RWPE1 (cell line): ENCODE measurements at regions of chr17 and their contacts with region 1.

Region 1: DNA sequence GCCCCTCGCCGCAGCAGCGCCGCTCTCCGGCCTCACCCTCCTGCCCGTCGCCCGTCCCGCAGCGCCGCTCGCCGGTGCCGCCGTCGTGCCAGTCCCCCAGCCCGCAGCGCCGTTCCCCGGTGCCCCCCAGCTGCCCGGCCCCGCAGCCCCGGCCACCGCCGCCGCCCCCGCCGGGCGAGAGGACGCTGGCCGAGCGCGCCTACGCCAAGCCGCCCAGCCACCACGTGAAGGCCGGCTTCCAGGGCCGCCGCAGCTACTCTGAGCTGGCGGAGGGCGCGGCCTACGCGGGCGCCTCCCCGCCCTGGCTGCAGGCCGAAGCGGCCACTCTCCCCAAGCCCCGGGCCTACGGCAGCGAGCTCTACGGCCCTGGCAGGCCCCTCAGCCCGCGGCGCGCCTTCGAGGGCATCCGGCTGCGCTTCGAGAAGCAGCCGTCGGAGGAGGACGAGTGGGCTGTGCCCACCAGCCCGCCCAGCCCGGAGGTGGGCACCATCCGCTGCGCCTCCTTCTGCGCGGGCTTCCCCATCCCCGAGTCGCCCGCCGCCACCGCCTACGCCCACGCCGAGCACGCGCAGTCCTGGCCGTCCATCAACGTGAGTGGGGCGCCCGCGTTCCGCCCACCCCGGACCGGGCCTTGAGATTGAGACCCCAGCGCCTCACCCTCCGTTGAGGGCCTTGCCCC is 15.0 kb downstream of the TBKBP1 start:
- DNase-seq: no peak
- H3K27ac ChIP-seq: no peak overlapping the region
- CTCF ChIP-seq: no peak

Region 2: DNA sequence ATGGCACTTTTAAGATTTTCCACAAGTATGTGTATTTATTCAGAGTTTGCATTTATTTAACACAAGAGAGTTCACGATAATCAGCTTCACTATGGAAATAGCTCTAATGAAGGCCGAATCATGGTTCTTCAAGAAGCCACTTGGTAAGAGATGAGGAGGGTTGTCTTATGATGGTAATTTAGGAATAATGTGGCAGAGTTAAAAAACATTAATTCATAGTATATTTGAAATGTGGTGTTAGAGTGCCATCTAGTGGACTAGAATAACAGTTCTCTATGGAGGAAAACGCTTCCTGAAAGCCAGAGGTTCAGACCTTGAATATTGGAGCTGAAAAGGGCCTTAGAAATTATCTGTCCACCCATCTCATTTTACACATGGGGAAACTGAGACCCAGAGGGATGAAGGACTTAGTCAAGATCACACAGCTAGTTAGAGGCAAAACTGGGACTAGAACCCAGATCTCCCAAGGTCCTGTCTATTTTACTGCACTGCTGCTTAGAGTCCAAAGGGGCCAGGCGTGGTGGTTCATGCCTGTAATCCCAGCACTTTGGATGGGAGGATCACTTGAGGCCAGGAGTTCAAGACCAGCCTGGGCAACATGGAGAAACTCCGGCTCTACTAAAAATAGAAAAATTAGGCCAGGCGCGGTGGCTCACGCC is 93.1 kb before region 1 on chr17:
- CTCF ChIA-PET with region 1: no interaction called
- POLR2A ChIA-PET with region 1: no interaction called
- DNase-seq: peak; percentile 19
- H3K27ac ChIP-seq: 0 out of 2 replicates have a peak overlapping the region, but pooled peaks have one; percentile 29
- CTCF ChIP-seq: peak; percentile 79

Region 3: DNA sequence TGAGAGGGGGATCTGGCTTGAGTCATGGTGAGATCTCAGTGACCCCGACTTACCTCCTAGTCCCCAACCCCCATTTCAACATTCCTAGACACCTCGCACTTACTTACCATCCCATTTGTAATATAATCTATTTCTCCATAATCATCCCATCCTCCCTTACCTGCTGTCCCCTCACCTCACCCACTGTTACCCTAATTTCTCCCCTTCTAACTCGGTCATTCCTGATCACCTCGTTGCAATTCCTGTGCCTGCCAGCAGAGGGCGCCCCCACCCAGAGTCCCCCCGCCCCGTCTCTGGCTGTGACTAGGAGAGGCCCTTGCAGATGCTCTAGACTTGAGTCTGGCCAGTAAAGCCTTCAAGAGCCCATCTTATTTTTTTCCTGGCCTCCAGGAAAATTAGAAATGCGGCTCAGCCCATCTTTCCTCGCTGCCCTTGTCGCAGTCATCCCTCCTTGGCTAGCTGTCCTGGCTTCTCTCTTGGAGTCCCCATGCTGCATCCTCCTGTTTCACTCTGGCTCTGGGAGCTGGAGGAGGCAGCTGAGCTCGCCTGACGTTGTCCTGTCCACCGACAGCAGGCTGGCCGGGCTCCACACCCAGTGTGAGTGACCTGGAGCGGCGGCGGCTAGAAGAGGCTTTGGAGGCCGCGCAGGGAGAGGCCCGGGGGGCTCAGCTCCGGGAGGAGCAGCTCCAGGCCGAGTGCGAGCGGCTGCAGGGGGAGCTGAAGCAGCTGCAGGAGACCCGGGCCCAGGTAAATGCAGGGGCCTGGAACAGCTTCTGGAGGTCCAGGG is 10.1 kb before region 1 on chr17:
- CTCF ChIA-PET with region 1: interaction called, 12 read pairs
- POLR2A ChIA-PET with region 1: no interaction called
- DNase-seq: peak; percentile 88
- H3K27ac ChIP-seq: no peak overlapping the region
- CTCF ChIP-seq: peak; percentile 99